ENCODE measurements at regions of chr1 and their contacts with region 1.

Region 1: DNA sequence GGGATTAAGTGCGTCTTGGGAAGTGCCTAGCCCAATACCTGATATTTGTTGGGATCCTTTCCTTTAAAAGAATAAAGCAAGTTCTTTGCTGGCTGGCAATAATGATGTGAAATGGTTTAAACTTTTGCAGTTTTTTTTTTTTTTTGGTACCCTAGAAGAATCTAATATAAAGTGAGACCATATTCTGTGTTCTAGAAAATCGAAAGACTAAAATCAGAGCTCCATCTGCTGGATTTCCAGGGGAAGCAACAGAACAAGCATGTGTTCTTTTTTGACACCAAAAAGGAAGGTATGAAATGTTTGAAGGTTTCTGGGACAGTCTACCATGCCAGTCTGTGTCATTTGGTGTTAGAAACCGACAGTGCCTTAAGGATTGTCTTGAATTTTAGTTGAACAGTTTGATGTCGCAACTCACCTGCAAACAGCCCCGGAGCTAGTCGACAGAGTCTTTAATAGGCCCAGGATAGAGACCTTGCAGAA is 6.4 kb downstream of the UTP11 start:
- DNase-seq: peak; percentile 60
- ATAC-seq: peak; percentile 50
- H3K4me3 ChIP-seq: no peak overlapping the region
- H3K27ac ChIP-seq: peak overlapping the region; percentile 25; the same call in 1 of the 2 replicates
- H3K4me1 ChIP-seq: peaks cover 9% of the 10 kb centered on the region
- H3K27me3 ChIP-seq: no peaks in the 10 kb centered on the region
- CTCF ChIP-seq: peak; percentile 81
- POLR2A ChIP-seq: no peak
- RAD21 ChIP-seq: peak; percentile 72

Region 2: DNA sequence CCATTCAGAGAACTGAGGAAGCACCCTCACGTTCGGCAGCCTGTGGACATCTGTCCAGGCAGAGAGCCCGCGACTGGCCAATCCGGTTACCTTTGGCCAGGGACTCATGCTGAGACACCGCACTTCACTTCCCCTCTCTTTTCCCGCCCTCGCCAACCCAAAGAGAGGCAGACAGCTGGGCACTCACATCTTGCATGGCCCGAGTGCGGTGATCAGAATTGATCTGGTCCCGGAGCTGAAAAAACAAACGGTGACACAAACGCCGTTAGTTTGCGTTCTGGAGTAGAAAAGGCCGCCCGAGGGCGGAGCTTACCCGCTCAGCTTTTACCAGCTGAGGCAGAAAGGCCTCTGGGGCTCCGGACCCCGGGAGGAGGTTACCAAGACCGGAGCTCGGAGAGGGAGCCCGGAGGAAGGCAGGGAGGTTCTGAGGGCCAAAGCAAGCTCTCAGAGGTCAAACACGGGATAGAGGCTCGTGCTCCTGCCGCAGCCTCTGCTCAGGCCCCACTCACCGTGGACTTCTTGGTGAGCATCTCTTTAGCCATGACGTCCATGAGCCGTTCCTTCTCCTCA is 29.5 kb before region 1 on chr1:
- CTCF ChIA-PET with region 1: interaction called, 6 read pairs
- POLR2A ChIA-PET with region 1: interaction called, 4 read pairs
- dilution Hi-C with region 1: no loop called
- in situ Hi-C with region 1: no loop called
- intact Hi-C with region 1: loop called (anchors 1 kb)
- DNase-seq: peak; percentile 23
- ATAC-seq: peak; percentile 44
- H3K4me3 ChIP-seq: peak overlapping the region; percentile 57
- H3K27ac ChIP-seq: peak overlapping the region; percentile 64
- H3K4me1 ChIP-seq: no peaks in the 10 kb centered on the region
- H3K27me3 ChIP-seq: no peaks in the 10 kb centered on the region
- CTCF ChIP-seq: no peak
- POLR2A ChIP-seq: no peak
- RAD21 ChIP-seq: no peak